ENCODE measurements at regions of chr2 and their contacts with region 1.

Region 1: DNA sequence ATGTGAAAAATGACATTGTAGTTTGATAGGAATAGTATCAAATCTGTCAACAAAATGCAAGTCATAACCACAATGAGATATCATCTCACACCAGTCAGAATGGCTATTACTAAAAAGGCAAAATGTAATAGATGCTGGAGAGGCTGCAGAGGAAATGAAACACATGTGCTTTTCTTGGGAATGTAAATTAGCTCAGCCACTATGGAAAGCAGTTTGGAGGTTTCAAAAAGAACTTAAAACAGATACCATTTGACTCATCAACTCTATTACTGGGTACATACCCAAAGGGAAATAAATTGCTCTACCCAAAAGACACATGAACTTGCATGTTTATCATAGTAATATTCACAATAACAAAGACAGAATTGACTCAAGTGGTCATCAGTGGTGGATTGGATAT is 572.6 kb downstream of the TRIB2 start:
- DNase-seq: no peak
- H3K4me3 Mint-ChIP-seq: no peak overlapping the region
- H3K27ac Mint-ChIP-seq: no peak overlapping the region
- H3K4me1 Mint-ChIP-seq: no peaks in the 10 kb centered on the region
- H3K27me3 Mint-ChIP-seq: no peaks in the 10 kb centered on the region
- CTCF ChIP-seq: no peak

Region 2: GRCh38 chr2:13266166-13266565 is 23.1 kb before region 1 on chr2:
- CTCF ChIA-PET with region 1: no interaction called
- intact Hi-C with region 1: loop called (anchors 2 kb)
- DNase-seq: no peak
- H3K4me3 Mint-ChIP-seq: no peak overlapping the region
- H3K27ac Mint-ChIP-seq: no peak overlapping the region
- H3K4me1 Mint-ChIP-seq: no peaks in the 10 kb centered on the region
- H3K27me3 Mint-ChIP-seq: no peaks in the 10 kb centered on the region
- CTCF ChIP-seq: no peak